Pancreas (tissue), 10 donors: ENCODE measurements at regions of chr5 and their contacts with region 1.

Region 1: DNA sequence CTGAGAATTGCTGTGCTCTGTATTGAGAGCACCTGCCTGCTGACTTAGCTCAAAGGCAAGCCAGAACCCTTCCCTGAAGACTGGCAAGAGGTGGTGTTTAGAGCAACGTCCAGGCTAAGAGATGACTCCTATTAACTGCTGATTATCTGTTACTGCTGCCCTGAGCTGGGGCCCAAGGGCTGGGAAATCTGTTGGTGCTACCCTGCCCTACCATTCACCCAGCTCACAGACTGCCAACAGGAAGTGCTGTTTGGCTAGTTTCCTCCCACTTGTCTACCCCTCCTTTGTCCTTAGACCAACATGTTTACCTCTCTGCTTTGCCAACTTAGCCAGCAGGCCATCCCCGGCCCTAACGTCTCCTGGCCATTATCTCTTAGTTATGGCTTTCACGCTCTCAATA is 6.9 kb downstream of the RAB24 start:
- DNase-seq: peak in 1 of 6 donors; percentile 22
- ATAC-seq: peak in 3 of 4 donors; percentile 14 to 40 (median 35)
- H3K4me3 ChIP-seq: no peak overlapping the region
- H3K27ac ChIP-seq: peak overlapping the region in 1 of 4 donors; percentile 34
- H3K4me1 ChIP-seq: peaks cover 13 to 27% (median 15%) of the 10 kb centered on the region in 3 donors
- H3K27me3 ChIP-seq: no peaks in the 10 kb centered on the region
- CTCF ChIP-seq: no peak

Region 2: DNA sequence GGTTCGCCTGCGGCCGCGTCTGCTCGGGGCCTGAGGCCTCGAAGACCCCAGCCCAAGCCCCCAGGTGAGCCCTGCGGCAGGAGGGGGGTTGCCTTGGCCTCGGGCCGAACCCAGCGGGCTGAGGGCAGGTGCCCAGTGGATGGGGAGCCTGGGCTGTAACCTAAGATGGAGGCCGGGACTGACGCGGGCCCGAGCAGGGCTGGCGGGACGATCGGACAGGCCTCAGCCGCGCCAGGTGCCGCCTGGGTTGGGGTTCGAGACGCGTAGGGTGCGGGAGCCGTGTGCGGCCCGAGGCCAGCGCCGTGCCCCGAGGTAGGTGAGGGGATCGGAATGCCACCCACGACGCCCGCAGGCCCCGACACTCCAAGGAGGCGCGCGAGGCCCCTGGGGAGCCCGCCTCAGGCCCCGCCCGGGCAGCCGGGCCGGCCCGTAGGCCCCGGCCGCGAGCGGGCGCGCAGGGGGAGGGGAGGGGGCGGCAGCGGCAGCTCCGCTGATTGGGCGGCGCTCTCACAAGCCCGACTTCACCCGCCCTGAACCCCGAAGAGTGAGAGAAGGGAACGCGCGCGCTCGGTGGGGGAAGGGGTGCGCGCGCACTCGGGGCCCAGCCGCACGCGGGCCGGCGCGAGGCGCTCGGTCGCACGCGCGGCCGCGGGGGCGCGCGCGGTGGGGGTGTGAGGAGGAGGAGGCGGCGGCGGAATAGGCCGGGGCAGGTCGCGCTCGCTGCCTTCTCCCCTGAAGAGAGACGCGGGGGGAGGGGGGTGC is 163.3 kb before region 1 on chr5 and contains the start of gene NSD1:
- intact Hi-C with region 1: loop called in 1 of 3 experiments (anchors 10 kb)
- DNase-seq: peak; percentile 78 to 92 (median 84)
- ATAC-seq: peak; percentile 70 to 84 (median 82)
- H3K4me3 ChIP-seq: peak within 1 kb of the TSS; percentile 56 to 92 (median 60)
- H3K27ac ChIP-seq: peak within 1 kb of the TSS; percentile 74 to 88 (median 81)
- H3K4me1 ChIP-seq: peaks cover 20 to 32% (median 30%) of the 10 kb centered on the region in 3 donors
- H3K27me3 ChIP-seq: no peaks in the 10 kb centered on the region
- CTCF ChIP-seq: no peak
- total RNA-seq, gene NSD1: 26.3 to 51.2 (median 33.6) TPM

Region 3: DNA sequence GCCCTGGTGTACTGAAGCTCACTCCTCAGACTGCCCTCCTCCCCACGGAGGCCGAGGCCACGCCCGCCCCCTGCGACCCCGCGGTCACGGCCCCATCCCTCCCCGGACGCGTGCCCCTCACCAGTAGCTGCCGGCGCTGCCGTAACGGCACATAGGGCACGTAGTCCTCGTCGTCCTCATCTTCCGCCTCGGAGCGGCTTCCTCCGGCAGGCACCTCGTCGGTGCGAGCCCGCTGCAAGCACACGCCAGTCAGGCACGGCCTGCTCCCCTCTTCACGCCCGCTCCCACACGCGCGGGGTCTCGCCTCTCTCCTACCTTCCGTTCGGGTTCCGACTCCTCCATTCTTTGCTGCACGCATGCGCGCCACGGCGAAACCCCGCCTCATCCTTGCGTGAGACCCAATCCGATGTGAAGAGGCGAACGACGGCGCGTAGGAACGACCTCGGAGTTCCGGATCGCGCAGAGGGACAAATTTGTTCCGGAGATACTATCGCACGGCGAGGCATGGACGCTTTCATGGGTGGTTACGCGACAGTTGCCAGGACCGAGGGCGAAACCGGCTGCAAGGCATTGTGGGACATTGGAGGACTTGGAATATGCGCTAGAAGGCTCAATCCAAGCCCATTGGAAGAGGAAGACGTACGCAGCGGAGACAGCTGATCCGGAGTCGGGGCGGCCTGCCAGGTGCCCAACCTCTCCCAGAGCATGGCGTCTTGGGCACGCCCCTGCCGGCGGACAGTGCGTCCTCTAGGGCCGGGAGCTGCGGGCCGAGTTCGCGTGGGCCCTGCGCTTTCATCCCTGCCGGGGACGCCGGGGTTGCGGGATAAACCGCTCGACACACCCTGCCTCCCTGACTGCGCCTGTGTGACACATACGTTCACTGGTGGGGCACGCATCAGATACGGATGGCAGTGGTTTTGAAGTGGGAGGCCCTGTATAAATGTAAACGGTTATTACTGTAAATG is 220.3 kb after region 1 on chr5 and contains the start of gene DDX41:
- intact Hi-C with region 1: no loop called
- DNase-seq: peak; percentile 96 to 99 (median 97)
- ATAC-seq: peak; percentile 92 to 96 (median 95)
- H3K4me3 ChIP-seq: peak within 1 kb of the TSS; percentile 65 to 98 (median 81)
- H3K27ac ChIP-seq: peak within 1 kb of the TSS; percentile 50 to 79 (median 68)
- H3K4me1 ChIP-seq: peaks cover 0 to 11% (median 4%) of the 10 kb centered on the region in 3 donors
- H3K27me3 ChIP-seq: no peaks in the 10 kb centered on the region
- CTCF ChIP-seq: no peak
- total RNA-seq, gene DDX41: 24.3 to 47.4 (median 39.4) TPM